ENCODE measurements at regions of chr21 and their contacts with region 1.

Region 1: GRCh38 chr21:34582506-34583150 is 32.3 kb downstream of the RCAN1 start:
- DNase-seq: peak in 1 of 2 experiments; percentile 37
- H3K4me3 ChIP-seq: no peak overlapping the region
- H3K27ac ChIP-seq: no peak overlapping the region
- H3K4me1 ChIP-seq: peaks cover 27% of the 10 kb centered on the region
- H3K27me3 ChIP-seq: no peaks in the 10 kb centered on the region
- CTCF ChIP-seq: peak; percentile 44; the same call in 1 of the 2 replicates

Region 2: GRCh38 chr21:34510148-34511142 is 72.2 kb before region 1 on chr21:
- CTCF ChIA-PET with region 1: no interaction called
- POLR2A ChIA-PET with region 1: no interaction called
- intact Hi-C with region 1: loop called (anchors 2 kb)
- DNase-seq: peak; percentile 56 to 57
- H3K4me3 ChIP-seq: no peak overlapping the region
- H3K27ac ChIP-seq: no peak overlapping the region
- H3K4me1 ChIP-seq: 0 out of 2 replicates have a peak, but pooled peaks cover 3% of the 10 kb centered on the region
- H3K27me3 ChIP-seq: no peaks in the 10 kb centered on the region
- CTCF ChIP-seq: peak; percentile 73

Region 3: GRCh38 chr21:34545079-34545884 is 37.3 kb before region 1 on chr21:
- CTCF ChIA-PET with region 1: no interaction called
- POLR2A ChIA-PET with region 1: no interaction called
- intact Hi-C with region 1: loop called (anchors 5 kb)
- DNase-seq: peak; percentile 65 to 98
- H3K4me3 ChIP-seq: peak overlapping the region; percentile 35; the same call in 1 of the 2 replicates
- H3K27ac ChIP-seq: peak overlapping the region; percentile 100
- H3K4me1 ChIP-seq: peaks cover 50% of the 10 kb centered on the region
- H3K27me3 ChIP-seq: no peaks in the 10 kb centered on the region
- CTCF ChIP-seq: no peak

Measured in PC-9 (cell line).